PC-3 (cell line): ENCODE measurements at regions of chrX and their contacts with region 1.

Region 1: GRCh38 chrX:118603981-118604380 is 108.4 kb downstream of the DOCK11 start:
- DNase-seq: peak; percentile 73
- ATAC-seq: peak; percentile 71
- H3K4me3 ChIP-seq: no peak overlapping the region; the same call in 1 of the 2 replicates
- H3K27ac ChIP-seq: no peak overlapping the region
- H3K4me1 ChIP-seq: no peaks in the 10 kb centered on the region
- H3K27me3 ChIP-seq: no peaks in the 10 kb centered on the region
- CTCF ChIP-seq: peak; percentile 81

Region 2: GRCh38 chrX:118459494-118459893 is 144.5 kb before region 1 on chrX:
- CTCF ChIA-PET with region 1: interaction called, 30 read pairs
- POLR2A ChIA-PET with region 1: no interaction called
- intact Hi-C with region 1: loop called (anchors 1 kb)
- DNase-seq: peak; percentile 52
- ATAC-seq: peak; percentile 81
- H3K4me3 ChIP-seq: no peak overlapping the region
- H3K27ac ChIP-seq: no peak overlapping the region
- H3K4me1 ChIP-seq: no peaks in the 10 kb centered on the region
- H3K27me3 ChIP-seq: no peaks in the 10 kb centered on the region
- CTCF ChIP-seq: peak; percentile 73

Region 3: GRCh38 chrX:118614150-118614549 is 10.2 kb after region 1 on chrX:
- CTCF ChIA-PET with region 1: interaction called, 12 read pairs
- POLR2A ChIA-PET with region 1: no interaction called
- intact Hi-C with region 1: no loop called
- DNase-seq: no peak
- ATAC-seq: no peak
- H3K4me3 ChIP-seq: no peak overlapping the region
- H3K27ac ChIP-seq: no peak overlapping the region
- H3K4me1 ChIP-seq: no peaks in the 10 kb centered on the region
- H3K27me3 ChIP-seq: no peaks in the 10 kb centered on the region
- CTCF ChIP-seq: no peak